T-cell (primary cell): ENCODE measurements at regions of chr17 and their contacts with region 1.

Region 1: DNA sequence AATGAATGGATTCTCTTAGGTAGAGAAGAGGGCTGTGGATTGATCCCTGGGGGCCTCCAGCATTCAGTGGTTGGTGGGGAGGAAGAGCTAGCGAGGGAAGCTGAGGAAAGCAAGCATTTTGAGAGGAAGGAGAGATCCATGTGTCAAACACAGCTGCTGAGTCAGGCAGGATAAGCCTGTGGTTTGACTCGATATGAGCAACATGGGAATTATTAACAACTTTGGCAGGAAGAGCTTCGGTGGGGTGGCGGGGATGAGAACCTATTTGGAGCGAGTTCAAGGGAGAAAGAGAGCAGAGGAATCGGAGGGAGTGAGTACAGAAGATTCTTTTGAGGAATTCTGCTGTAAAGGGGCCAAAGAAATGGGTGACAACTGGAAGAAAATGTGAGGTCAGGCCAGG is 59.5 kb upstream of the CDC42EP4 start:
- DNase-seq: no peak
- ATAC-seq: no peak
- H3K4me3 ChIP-seq: no peak overlapping the region
- H3K4me3 Mint-ChIP-seq: no peak overlapping the region
- H3K27ac ChIP-seq: no peak overlapping the region
- H3K27ac Mint-ChIP-seq: no peak overlapping the region
- H3K4me1 ChIP-seq: no peaks in the 10 kb centered on the region
- H3K4me1 Mint-ChIP-seq: no peaks in the 10 kb centered on the region
- H3K27me3 ChIP-seq: peaks cover 0 to 19% of the 10 kb centered on the region in 2 experiments
- H3K27me3 Mint-ChIP-seq: peaks cover 0 to 2% of the 10 kb centered on the region in 2 donors

Region 2: DNA sequence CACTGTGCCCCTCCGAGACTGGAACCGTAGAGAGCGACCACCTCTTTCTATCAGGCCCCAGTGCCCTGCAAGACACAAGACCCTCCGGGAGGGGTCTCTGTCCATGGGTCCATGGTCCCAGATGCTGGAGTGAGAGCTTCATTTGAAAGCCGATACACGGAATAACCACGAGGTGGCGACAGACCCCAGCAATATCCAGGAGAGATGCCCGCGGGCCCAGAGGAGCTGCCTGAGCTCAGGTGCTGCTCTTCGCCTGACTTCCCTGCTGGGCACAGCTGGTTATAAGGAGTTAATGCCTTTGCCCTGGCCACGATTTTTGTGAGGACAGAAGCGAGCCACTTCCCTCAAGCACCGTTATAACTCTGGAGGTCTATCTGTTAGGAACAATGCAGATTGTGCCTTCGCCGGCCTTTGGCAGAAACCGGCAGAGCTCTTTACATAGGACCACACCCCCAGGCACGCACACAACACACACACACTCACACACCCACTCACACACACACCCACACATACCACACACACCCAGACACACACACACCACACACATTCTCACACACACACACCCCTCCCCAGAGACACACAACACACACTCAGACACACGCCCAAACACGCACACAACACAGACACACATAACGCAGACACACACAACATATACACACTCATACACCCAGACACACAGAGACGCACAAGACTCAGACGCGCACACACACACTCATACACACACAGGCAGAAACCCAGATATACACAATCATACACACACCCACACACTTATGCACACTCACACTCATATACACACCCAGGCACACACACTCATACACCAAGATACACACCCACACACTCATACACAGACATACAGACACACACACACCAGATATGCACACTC is 814.1 kb before region 1 on chr17:
- CTCF ChIA-PET with region 1: interaction called, 5 to 12 read pairs
- POLR2A ChIA-PET with region 1: no interaction called
- DNase-seq: peak in 31 of 35 experiments; percentile 8 to 67 (median 35)
- ATAC-seq: peak; percentile 27 to 51 (median 44)
- H3K4me3 ChIP-seq: no peak overlapping the region
- H3K4me3 Mint-ChIP-seq: no peak overlapping the region
- H3K27ac ChIP-seq: no peak overlapping the region
- H3K27ac Mint-ChIP-seq: no peak overlapping the region
- H3K4me1 ChIP-seq: peaks cover 0 to 4% of the 10 kb centered on the region in 2 experiments
- H3K4me1 Mint-ChIP-seq: peaks cover 0 to 2% (median 0%) of the 10 kb centered on the region in 3 donors
- H3K27me3 ChIP-seq: peaks cover 0 to 7% of the 10 kb centered on the region in 2 experiments
- H3K27me3 Mint-ChIP-seq: peaks cover 1 to 4% of the 10 kb centered on the region in 2 donors

Region 3: DNA sequence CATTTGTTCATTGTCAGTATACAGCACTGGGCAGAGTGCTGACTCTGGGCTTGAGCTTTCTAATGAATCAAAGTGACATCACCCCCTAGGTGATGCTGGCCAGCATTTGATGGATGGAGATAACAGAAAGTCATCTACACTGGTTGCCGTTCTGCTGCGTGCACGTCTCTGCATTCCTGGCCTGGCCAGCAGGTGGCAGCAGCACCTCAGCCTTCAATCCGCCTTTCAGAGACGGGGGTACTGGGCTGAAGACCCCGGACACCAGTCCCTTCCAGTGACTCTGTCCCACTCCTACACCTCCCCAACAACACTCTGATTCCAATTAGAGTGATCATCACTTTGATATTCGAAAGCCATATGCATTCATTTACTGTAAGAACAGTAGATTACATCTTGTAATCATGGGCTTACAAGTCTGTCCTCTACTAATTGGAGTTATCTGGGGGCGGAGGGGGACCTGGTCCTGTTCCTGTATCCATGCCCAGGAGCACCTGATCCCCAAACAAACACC is 115.6 kb before region 1 on chr17:
- CTCF ChIA-PET with region 1: interaction called, 12 to 14 read pairs
- POLR2A ChIA-PET with region 1: no interaction called
- DNase-seq: peak in 31 of 35 experiments; percentile 7 to 72 (median 37)
- ATAC-seq: peak; percentile 65 to 78 (median 70)
- H3K4me3 ChIP-seq: no peak overlapping the region
- H3K4me3 Mint-ChIP-seq: no peak overlapping the region
- H3K27ac ChIP-seq: no peak overlapping the region
- H3K27ac Mint-ChIP-seq: no peak overlapping the region
- H3K4me1 ChIP-seq: peaks cover 0 to 5% of the 10 kb centered on the region in 2 experiments
- H3K4me1 Mint-ChIP-seq: peaks cover 0 to 4% (median 4%) of the 10 kb centered on the region in 3 donors
- H3K27me3 ChIP-seq: peaks cover 0 to 3% of the 10 kb centered on the region in 2 experiments
- H3K27me3 Mint-ChIP-seq: no peaks in the 10 kb centered on the region

Region 4: DNA sequence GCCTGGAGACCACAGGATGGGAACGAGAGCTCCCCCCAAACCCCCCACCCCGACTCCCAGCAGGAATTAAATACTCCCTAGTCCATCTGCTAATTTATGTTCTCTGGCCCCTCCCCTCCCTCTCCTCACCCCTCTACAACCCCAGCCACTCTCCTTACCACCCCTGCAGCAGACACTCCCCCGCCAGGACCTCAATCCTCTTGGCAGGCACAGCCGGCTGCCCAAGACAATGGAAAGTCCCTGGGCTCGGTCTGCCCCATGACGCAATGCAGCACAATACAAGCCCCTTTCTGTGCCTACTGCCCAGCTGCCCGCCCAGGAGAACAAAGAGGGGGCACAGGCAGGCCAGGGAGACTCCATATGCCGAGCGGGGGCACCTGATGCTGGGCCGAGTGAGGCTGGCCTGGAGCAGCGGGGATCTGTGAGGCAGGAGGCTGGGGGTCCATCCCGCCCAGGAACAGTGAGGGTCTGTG is 29.2 kb before region 1 on chr17:
- CTCF ChIA-PET with region 1: no interaction called
- POLR2A ChIA-PET with region 1: no interaction called
- DNase-seq: no peak
- ATAC-seq: no peak
- H3K4me3 ChIP-seq: no peak overlapping the region
- H3K4me3 Mint-ChIP-seq: no peak overlapping the region
- H3K27ac ChIP-seq: no peak overlapping the region
- H3K27ac Mint-ChIP-seq: no peak overlapping the region
- H3K4me1 ChIP-seq: no peaks in the 10 kb centered on the region
- H3K4me1 Mint-ChIP-seq: no peaks in the 10 kb centered on the region
- H3K27me3 ChIP-seq: peaks cover 0 to 33% of the 10 kb centered on the region in 2 experiments
- H3K27me3 Mint-ChIP-seq: no peaks in the 10 kb centered on the region

Region 5: DNA sequence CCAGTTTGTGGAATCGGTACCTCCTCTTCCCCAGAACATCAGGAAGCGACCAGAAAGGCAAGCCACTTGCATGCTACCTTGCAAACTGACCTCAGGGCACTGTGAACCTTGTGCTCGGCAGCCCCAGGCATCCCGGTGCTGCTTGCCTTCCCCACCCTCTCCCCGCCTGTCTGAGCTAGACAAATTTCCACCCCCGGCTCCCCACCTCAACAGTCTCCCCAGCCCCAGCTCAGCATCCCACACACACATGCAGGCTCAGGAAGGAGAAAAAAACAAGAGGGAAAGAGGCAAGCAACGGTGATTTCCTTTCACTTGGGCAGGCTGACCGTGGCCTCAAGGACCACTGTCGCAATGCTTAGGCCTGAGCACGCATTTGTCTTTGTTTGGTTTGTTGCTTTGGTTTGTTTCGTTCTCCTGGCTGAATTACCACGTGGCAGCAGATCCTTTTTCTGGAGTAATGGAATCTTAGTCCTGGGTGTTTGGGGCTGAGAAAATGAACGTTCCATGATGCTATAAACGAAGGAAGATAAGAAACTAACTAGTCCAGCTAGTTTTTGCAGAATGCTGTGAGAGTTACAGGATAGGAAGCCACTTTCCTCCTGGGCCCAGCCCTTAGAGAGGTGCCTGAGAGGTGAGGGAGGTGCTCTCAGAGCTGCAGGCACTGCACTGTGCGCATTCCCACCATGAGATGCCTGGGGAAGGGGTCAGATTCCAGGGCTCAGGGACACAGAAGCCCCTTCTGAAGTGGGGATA is 245.0 kb after region 1 on chr17:
- CTCF ChIA-PET with region 1: interaction called in 1 of 2 experiments, 15 read pairs
- POLR2A ChIA-PET with region 1: no interaction called
- DNase-seq: no peak
- ATAC-seq: no peak
- H3K4me3 ChIP-seq: no peak overlapping the region
- H3K4me3 Mint-ChIP-seq: no peak overlapping the region
- H3K27ac ChIP-seq: no peak overlapping the region
- H3K27ac Mint-ChIP-seq: no peak overlapping the region
- H3K4me1 ChIP-seq: no peaks in the 10 kb centered on the region
- H3K4me1 Mint-ChIP-seq: peaks cover 5 to 7% (median 5%) of the 10 kb centered on the region in 3 donors
- H3K27me3 ChIP-seq: peaks cover 0 to 20% of the 10 kb centered on the region in 2 experiments
- H3K27me3 Mint-ChIP-seq: no peaks in the 10 kb centered on the region

Region 6: GRCh38 chr17:73782641-73783381 is 411.5 kb after region 1 on chr17:
- CTCF ChIA-PET with region 1: no interaction called
- POLR2A ChIA-PET with region 1: no interaction called
- DNase-seq: peak in 5 of 35 experiments; percentile 3 to 25 (median 8)
- ATAC-seq: no peak
- H3K4me3 ChIP-seq: no peak overlapping the region
- H3K4me3 Mint-ChIP-seq: no peak overlapping the region
- H3K27ac ChIP-seq: no peak overlapping the region
- H3K27ac Mint-ChIP-seq: peak overlapping the region in 1 of 2 donors; percentile 81
- H3K4me1 ChIP-seq: peaks cover 0 to 8% of the 10 kb centered on the region in 2 experiments
- H3K4me1 Mint-ChIP-seq: peaks cover 12 to 20% (median 15%) of the 10 kb centered on the region in 3 donors
- H3K27me3 ChIP-seq: peaks cover 0 to 40% of the 10 kb centered on the region in 2 experiments
- H3K27me3 Mint-ChIP-seq: peaks cover 0 to 10% of the 10 kb centered on the region in 2 donors